T-cell (primary cell): ENCODE measurements at regions of chr17 and their contacts with region 1.

Region 1: DNA sequence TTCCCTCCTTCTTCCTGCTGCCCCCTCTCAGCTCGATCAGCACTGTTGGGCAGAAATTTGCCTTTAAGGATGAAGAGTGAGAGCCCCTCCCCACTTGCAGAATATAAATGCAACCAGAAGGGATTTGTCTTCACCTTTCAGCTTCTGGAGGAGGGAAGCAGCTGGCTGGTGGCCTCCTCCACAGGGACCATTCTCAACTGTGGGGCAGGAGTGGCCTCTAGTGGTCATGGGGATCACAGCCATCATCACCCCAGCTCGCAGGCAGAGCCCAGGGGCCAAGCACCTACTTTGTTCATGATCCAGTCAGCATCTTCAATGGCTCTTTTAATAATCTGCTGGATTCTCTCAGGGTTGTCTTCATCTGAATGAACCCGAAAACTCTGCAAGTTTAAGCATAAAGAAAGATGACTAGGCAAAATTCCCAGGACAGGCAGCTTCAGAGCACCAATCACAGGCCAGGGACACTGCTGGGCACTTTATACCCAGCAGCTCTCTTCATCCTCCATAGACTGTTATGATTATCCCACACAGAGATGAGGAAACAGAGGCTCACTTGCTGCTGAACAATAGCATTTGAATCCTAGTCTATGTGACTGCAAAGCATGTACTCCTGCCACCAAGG is 13.1 kb downstream of the LYRM9 start:
- DNase-seq: peak in 34 of 35 experiments; percentile 23 to 76 (median 52)
- ATAC-seq: peak; percentile 66 to 86 (median 74)
- H3K4me3 ChIP-seq: no peak overlapping the region
- H3K4me3 Mint-ChIP-seq: peak overlapping the region in 1 of 3 donors; percentile 66
- H3K27ac ChIP-seq: no peak overlapping the region
- H3K27ac Mint-ChIP-seq: peak overlapping the region in 1 of 2 donors; percentile 43
- H3K4me1 ChIP-seq: peaks cover 12 to 18% of the 10 kb centered on the region in 2 experiments
- H3K4me1 Mint-ChIP-seq: peaks cover 18 to 22% (median 21%) of the 10 kb centered on the region in 3 donors
- H3K27me3 ChIP-seq: no peaks in the 10 kb centered on the region
- H3K27me3 Mint-ChIP-seq: no peaks in the 10 kb centered on the region

Region 2: GRCh38 chr17:27760069-27760885 is 119.8 kb before region 1 on chr17:
- CTCF ChIA-PET with region 1: interaction called, 6 to 14 read pairs
- POLR2A ChIA-PET with region 1: no interaction called
- DNase-seq: peak in 34 of 35 experiments; percentile 20 to 74 (median 56)
- ATAC-seq: peak; percentile 47 to 64 (median 54)
- H3K4me3 ChIP-seq: no peak overlapping the region
- H3K4me3 Mint-ChIP-seq: no peak overlapping the region
- H3K27ac ChIP-seq: no peak overlapping the region
- H3K27ac Mint-ChIP-seq: no peak overlapping the region
- H3K4me1 ChIP-seq: no peaks in the 10 kb centered on the region
- H3K4me1 Mint-ChIP-seq: peaks cover 0 to 2% (median 0%) of the 10 kb centered on the region in 3 donors
- H3K27me3 ChIP-seq: peaks cover 0 to 21% of the 10 kb centered on the region in 2 experiments
- H3K27me3 Mint-ChIP-seq: peaks cover 0 to 3% of the 10 kb centered on the region in 2 donors

Region 3: DNA sequence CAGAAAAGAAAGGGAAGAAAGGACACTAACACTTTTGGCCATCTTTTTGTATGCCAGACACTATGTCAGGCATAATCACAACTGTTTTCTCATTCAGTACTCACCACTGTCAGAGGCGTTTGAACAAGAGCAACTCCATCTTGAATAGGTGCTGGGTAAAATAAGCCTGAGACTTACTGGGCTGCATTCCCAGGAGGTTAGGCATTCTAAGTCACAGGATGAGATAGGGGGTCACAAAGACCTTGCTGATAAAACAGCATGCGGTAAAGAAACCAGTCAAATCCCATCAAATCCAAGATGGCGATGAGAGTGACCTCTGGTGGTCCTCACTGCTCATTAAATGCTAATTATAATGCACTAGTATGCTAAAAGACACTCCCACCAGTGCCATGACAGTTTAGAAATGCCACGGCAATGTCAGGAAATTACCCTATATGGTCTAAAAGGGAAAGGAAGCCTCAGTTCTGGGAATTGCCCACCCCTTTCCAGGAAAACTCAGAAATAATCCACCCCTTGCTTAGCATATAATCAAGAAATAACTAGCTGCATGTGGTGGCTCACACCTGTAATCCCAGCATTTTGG is 28.0 kb after region 1 on chr17:
- CTCF ChIA-PET with region 1: no interaction called
- POLR2A ChIA-PET with region 1: no interaction called
- DNase-seq: no peak
- ATAC-seq: no peak
- H3K4me3 ChIP-seq: no peak overlapping the region
- H3K4me3 Mint-ChIP-seq: no peak overlapping the region
- H3K27ac ChIP-seq: no peak overlapping the region
- H3K27ac Mint-ChIP-seq: no peak overlapping the region
- H3K4me1 ChIP-seq: no peaks in the 10 kb centered on the region
- H3K4me1 Mint-ChIP-seq: no peaks in the 10 kb centered on the region
- H3K27me3 ChIP-seq: peaks cover 0 to 13% of the 10 kb centered on the region in 2 experiments
- H3K27me3 Mint-ChIP-seq: peaks cover 14 to 20% of the 10 kb centered on the region in 2 donors

Region 4: GRCh38 chr17:28057731-28058279 is 177.7 kb after region 1 on chr17:
- CTCF ChIA-PET with region 1: interaction called in 1 of 2 experiments, 11 read pairs
- POLR2A ChIA-PET with region 1: no interaction called
- DNase-seq: no peak
- ATAC-seq: peak in 1 of 4 experiments; percentile 44
- H3K4me3 ChIP-seq: no peak overlapping the region
- H3K4me3 Mint-ChIP-seq: no peak overlapping the region
- H3K27ac ChIP-seq: no peak overlapping the region
- H3K27ac Mint-ChIP-seq: no peak overlapping the region
- H3K4me1 ChIP-seq: peaks cover 2 to 8% of the 10 kb centered on the region in 2 experiments
- H3K4me1 Mint-ChIP-seq: peaks cover 40 to 49% (median 41%) of the 10 kb centered on the region in 3 donors
- H3K27me3 ChIP-seq: no peaks in the 10 kb centered on the region
- H3K27me3 Mint-ChIP-seq: no peaks in the 10 kb centered on the region